Naive thymus-derived CD4-positive, alpha-beta T cell (primary cell): ENCODE measurements at regions of chr16 and their contacts with region 1.

Region 1: GRCh38 chr16:84484579-84485254 is 19.7 kb downstream of the MEAK7 start:
- DNase-seq: peak in 1 of 9 donors; percentile 23
- ATAC-seq: no peak
- H3K4me3 ChIP-seq: no peak overlapping the region
- H3K4me3 Mint-ChIP-seq: no peak overlapping the region
- H3K27ac ChIP-seq: no peak overlapping the region
- H3K27ac Mint-ChIP-seq: no peak overlapping the region
- H3K4me1 ChIP-seq: no peaks in the 10 kb centered on the region
- H3K4me1 Mint-ChIP-seq: peaks cover 0 to 2% (median 0%) of the 10 kb centered on the region in 7 donors
- H3K27me3 ChIP-seq: no peaks in the 10 kb centered on the region
- H3K27me3 Mint-ChIP-seq: no peaks in the 10 kb centered on the region

Region 2: GRCh38 chr16:84084570-84085270 is 400.0 kb before region 1 on chr16:
- CTCF ChIA-PET with region 1: no interaction called
- POLR2A ChIA-PET with region 1: no interaction called
- intact Hi-C with region 1: loop called in 1 of 2 experiments (anchors 5 kb)
- DNase-seq: peak; percentile 31 to 71 (median 65)
- ATAC-seq: peak; percentile 87
- H3K4me3 ChIP-seq: no peak overlapping the region
- H3K4me3 Mint-ChIP-seq: peak overlapping the region in 1 of 10 donors; percentile 18
- H3K27ac ChIP-seq: no peak overlapping the region
- H3K27ac Mint-ChIP-seq: peak overlapping the region in 1 of 9 donors; percentile 15
- H3K4me1 ChIP-seq: peaks cover 4 to 24% of the 10 kb centered on the region in 2 donors
- H3K4me1 Mint-ChIP-seq: peaks cover 31 to 59% (median 52%) of the 10 kb centered on the region in 7 donors
- H3K27me3 ChIP-seq: no peaks in the 10 kb centered on the region
- H3K27me3 Mint-ChIP-seq: no peaks in the 10 kb centered on the region

Region 3: DNA sequence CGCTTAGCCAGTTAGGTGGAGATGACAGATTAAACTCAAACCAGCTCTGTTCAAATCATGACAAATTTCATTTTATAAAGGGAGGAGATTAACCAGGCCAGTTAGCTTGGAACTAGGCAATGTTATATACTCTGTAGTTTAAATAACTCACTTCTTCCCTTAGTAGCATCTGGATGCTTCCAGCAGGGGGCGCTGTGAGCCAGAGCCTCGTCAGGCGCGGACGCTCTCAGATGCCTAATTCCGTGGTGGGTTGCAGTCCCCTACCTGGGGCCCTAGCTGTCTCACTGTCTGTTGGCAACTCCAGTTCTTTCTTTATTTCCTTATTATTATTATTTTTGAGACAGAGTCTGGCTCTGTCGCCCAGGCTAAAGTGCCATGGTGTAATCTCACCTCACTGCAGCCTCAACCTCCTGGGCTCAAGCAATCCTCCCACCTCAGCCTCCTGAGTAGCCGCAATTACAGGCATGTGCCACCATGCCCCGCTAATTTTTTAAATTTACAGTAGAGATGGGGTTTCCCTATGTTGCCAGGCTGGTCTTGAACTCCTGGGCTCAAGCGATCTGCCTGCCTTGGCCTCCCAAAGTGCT is 207.4 kb before region 1 on chr16:
- CTCF ChIA-PET with region 1: interaction called, 4 read pairs
- POLR2A ChIA-PET with region 1: no interaction called
- intact Hi-C with region 1: loop called (anchors 1 kb)
- DNase-seq: peak; percentile 27 to 73 (median 58)
- ATAC-seq: peak; percentile 78
- H3K4me3 ChIP-seq: no peak overlapping the region
- H3K4me3 Mint-ChIP-seq: no peak overlapping the region
- H3K27ac ChIP-seq: no peak overlapping the region
- H3K27ac Mint-ChIP-seq: no peak overlapping the region
- H3K4me1 ChIP-seq: no peaks in the 10 kb centered on the region
- H3K4me1 Mint-ChIP-seq: no peaks in the 10 kb centered on the region
- H3K27me3 ChIP-seq: no peaks in the 10 kb centered on the region
- H3K27me3 Mint-ChIP-seq: peaks cover 0 to 10% (median 0%) of the 10 kb centered on the region in 5 donors

Region 4: GRCh38 chr16:84562174-84562815 is 77.6 kb after region 1 on chr16:
- CTCF ChIA-PET with region 1: no interaction called
- POLR2A ChIA-PET with region 1: no interaction called
- intact Hi-C with region 1: no loop called
- DNase-seq: no peak
- ATAC-seq: peak; percentile 79
- H3K4me3 ChIP-seq: no peak overlapping the region
- H3K4me3 Mint-ChIP-seq: no peak overlapping the region
- H3K27ac ChIP-seq: no peak overlapping the region
- H3K27ac Mint-ChIP-seq: peak overlapping the region in 2 of 9 donors; percentile 13 to 31
- H3K4me1 ChIP-seq: no peaks in the 10 kb centered on the region
- H3K4me1 Mint-ChIP-seq: peaks cover 0 to 28% (median 5%) of the 10 kb centered on the region in 7 donors
- H3K27me3 ChIP-seq: no peaks in the 10 kb centered on the region
- H3K27me3 Mint-ChIP-seq: no peaks in the 10 kb centered on the region